ENCODE measurements at regions of chr1 and their contacts with region 1.

Region 1: DNA sequence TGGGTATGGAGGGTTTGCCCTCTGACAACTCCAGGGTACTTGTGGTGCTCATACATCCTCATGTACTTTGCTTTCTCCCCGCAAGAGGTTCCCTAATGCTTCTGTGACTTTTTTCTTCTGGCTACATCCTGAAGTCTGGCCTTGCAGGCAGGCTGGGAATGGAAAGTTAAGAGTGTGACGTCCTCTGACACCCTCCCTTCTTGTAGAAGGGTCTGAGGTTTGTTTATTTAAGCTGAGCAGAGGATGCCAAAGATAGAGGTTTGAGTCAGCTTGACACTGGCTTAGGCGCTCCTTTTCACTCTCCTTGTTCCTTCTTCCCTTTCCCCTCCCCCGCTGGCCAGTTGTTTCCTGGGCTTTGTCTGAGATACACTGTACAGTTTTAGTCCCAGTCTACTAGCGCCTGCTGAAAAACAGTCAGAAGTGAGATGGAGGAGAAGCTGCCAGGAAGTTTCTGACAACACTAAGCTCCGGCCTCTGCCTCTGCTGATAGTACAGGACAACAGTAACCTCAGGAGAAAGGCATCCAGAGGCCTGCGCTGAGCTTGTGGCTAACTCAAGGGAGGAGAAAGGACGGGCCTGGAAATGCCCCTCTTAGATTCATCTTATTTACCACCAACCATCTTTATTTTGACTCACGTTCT is at the start of gene MACF1:
- DNase-seq: no peak
- ATAC-seq: peak; percentile 76
- H3K4me3 ChIP-seq: peak within 1 kb of the TSS; percentile 31 to 46
- H3K27ac ChIP-seq: peak within 1 kb of the TSS; percentile 82
- H3K4me1 ChIP-seq: peaks cover 25% of the 10 kb centered on the region
- H3K27me3 ChIP-seq: no peaks in the 10 kb centered on the region
- CTCF ChIP-seq: no peak; the same call in 1 of the 2 replicates
- total RNA-seq, gene MACF1: 413 TPM

Region 2: DNA sequence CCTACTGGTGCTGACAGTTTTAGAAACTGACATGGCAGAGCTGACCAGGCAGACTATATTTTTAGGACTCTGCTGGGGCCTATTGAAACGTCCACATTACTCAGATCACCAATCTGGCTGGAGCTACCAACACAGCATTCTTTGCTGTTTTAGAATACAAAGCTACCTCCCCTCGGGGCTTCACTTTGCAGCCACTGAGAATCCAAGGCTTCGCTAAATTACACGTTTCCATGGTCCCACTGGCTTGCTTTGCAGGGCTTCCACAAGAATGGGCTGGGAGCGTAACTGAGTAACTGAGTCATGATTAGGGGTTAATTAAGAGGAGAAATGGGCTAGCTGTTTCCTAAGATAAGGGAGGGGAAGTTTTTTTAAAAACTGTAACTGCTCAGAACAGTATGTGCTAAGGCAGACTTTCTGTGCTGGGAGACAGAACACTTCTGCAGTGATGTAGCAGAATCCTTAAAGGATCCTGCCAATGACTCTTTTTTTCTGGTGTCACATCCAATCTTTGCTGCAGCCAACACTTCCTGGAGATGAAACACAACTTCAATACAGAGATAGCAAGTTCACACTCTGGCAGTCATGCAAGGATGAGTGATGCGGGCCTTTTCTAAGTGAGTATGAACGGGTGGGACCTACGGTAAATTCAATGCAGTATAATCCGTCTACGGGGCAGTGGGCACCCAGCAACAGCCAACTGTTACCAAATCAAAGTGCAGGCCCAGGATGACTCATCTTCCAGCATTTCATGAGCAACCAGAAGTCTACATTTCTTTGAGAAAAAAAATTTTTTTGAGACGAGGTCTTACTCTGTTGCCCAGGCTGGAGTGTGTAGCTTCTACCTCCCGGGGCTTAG is 157.0 kb before region 1 on chr1:
- CTCF ChIA-PET with region 1: no interaction called
- POLR2A ChIA-PET with region 1: no interaction called
- in situ Hi-C with region 1: no loop called
- intact Hi-C with region 1: no loop called
- DNase-seq: no peak
- ATAC-seq: no peak
- H3K4me3 ChIP-seq: no peak overlapping the region
- H3K27ac ChIP-seq: no peak overlapping the region
- H3K4me1 ChIP-seq: no peaks in the 10 kb centered on the region
- H3K27me3 ChIP-seq: no peaks in the 10 kb centered on the region
- CTCF ChIP-seq: no peak

Region 3: GRCh38 chr1:39170731-39171667 is 33.6 kb before region 1 on chr1:
- CTCF ChIA-PET with region 1: no interaction called
- POLR2A ChIA-PET with region 1: interaction called, 10 read pairs
- in situ Hi-C with region 1: no loop called
- intact Hi-C with region 1: no loop called
- DNase-seq: no peak
- ATAC-seq: peak; percentile 50
- H3K4me3 ChIP-seq: peak overlapping the region in 1 of 2 experiments; percentile 5; a peak in 1 of 4 replicates
- H3K27ac ChIP-seq: peak overlapping the region; percentile 97
- H3K4me1 ChIP-seq: peaks cover 75% of the 10 kb centered on the region
- H3K27me3 ChIP-seq: no peaks in the 10 kb centered on the region
- CTCF ChIP-seq: no peak

Region 4: DNA sequence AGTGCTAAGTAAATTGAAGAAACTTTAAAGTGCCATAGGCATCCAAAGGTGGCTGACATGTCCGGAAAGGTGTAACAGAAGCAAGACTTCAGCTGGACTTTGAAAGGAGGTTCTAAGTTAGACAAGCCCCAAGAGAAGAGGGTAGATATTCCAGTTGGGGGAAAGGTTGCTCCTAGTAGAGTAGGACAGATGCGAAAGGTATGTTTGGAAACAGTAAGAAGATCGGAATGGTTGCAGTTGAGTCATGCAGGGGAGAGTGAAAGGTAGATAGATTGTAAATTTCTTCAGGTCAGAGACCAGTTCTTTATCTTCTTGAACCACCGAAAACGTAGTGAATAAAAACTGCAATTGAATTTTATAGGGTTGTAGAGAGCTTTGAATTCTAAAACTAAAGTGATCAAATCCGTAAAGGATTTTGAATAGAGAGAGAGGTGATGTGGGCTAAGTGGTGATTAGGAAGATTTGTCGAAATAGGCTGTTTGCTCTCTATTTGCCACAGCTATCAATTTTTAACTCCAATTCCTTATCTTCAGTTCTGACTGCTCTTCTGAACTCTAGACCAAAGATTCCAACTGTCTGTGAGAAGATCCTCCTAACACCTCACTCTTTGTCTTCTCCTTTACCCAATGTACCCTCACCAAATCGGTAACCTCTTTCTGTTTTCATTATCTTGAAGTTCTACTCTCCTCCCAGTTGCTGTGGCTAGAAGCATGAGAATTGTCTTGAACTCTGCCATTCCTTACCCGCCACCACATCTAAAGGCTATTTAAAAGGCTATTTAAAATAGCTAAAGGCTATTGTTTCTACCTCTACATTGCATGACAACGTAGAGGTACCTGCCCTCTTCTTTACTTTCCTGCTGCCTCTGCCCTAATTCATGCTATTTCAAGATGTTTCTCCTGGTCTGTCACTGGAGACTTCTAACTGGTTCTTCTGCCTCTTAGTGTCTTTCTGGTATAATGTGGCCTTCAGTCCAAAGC is 16.6 kb after region 1 on chr1:
- CTCF ChIA-PET with region 1: no interaction called
- POLR2A ChIA-PET with region 1: interaction called, 12 read pairs
- in situ Hi-C with region 1: no loop called
- intact Hi-C with region 1: no loop called
- DNase-seq: no peak
- ATAC-seq: no peak
- H3K4me3 ChIP-seq: no peak overlapping the region
- H3K27ac ChIP-seq: no peak overlapping the region
- H3K4me1 ChIP-seq: peaks cover 9% of the 10 kb centered on the region; the same call in 1 of the 2 replicates
- H3K27me3 ChIP-seq: no peaks in the 10 kb centered on the region
- CTCF ChIP-seq: no peak

Region 5: GRCh38 chr1:39609618-39610331 is 405.2 kb after region 1 on chr1:
- CTCF ChIA-PET with region 1: no interaction called
- POLR2A ChIA-PET with region 1: no interaction called
- in situ Hi-C with region 1: no loop called
- intact Hi-C with region 1: no loop called
- DNase-seq: peak; percentile 13
- ATAC-seq: peak; percentile 86
- H3K4me3 ChIP-seq: no peak overlapping the region
- H3K27ac ChIP-seq: no peak overlapping the region
- H3K4me1 ChIP-seq: no peaks in the 10 kb centered on the region
- H3K27me3 ChIP-seq: no peaks in the 10 kb centered on the region
- CTCF ChIP-seq: peak; percentile 94

Measured in Panc1 (cell line).